Naive thymus-derived CD4-positive, alpha-beta T cell (primary cell): ENCODE measurements at regions of chr3 and their contacts with region 1.

Region 1: GRCh38 chr3:52154117-52155094 is at the start of gene POC1A:
- DNase-seq: peak; percentile 73 to 90 (median 82)
- ATAC-seq: peak; percentile 92
- H3K4me3 ChIP-seq: peak within 1 kb of the TSS; percentile 98
- H3K4me3 Mint-ChIP-seq: peak within 1 kb of the TSS; percentile 88 to 98 (median 96)
- H3K27ac ChIP-seq: peak within 1 kb of the TSS; percentile 85
- H3K27ac Mint-ChIP-seq: peak within 1 kb of the TSS; percentile 87 to 98 (median 94)
- H3K4me1 ChIP-seq: peaks cover 4 to 6% of the 10 kb centered on the region in 2 donors
- H3K4me1 Mint-ChIP-seq: peaks cover 5 to 22% (median 6%) of the 10 kb centered on the region in 7 donors
- H3K27me3 ChIP-seq: no peaks in the 10 kb centered on the region
- H3K27me3 Mint-ChIP-seq: peaks cover 0 to 1% (median 0%) of the 10 kb centered on the region in 5 donors
- total RNA-seq, gene POC1A: 0.58 to 19.7 (median 1.2) TPM

Region 2: GRCh38 chr3:50358355-50358910 is 1796.0 kb before region 1 on chr3:
- CTCF ChIA-PET with region 1: no interaction called
- POLR2A ChIA-PET with region 1: no interaction called
- intact Hi-C with region 1: no loop called
- DNase-seq: no peak
- ATAC-seq: no peak
- H3K4me3 ChIP-seq: peak overlapping the region; percentile 88
- H3K4me3 Mint-ChIP-seq: peak overlapping the region; percentile 80 to 99 (median 90)
- H3K27ac ChIP-seq: peak overlapping the region; percentile 93
- H3K27ac Mint-ChIP-seq: peak overlapping the region; percentile 48 to 97 (median 84)
- H3K4me1 ChIP-seq: peaks cover 30% of the 10 kb centered on the region in 2 donors
- H3K4me1 Mint-ChIP-seq: peaks cover 32 to 58% (median 44%) of the 10 kb centered on the region in 7 donors
- H3K27me3 ChIP-seq: no peaks in the 10 kb centered on the region
- H3K27me3 Mint-ChIP-seq: no peaks in the 10 kb centered on the region

Region 3: DNA sequence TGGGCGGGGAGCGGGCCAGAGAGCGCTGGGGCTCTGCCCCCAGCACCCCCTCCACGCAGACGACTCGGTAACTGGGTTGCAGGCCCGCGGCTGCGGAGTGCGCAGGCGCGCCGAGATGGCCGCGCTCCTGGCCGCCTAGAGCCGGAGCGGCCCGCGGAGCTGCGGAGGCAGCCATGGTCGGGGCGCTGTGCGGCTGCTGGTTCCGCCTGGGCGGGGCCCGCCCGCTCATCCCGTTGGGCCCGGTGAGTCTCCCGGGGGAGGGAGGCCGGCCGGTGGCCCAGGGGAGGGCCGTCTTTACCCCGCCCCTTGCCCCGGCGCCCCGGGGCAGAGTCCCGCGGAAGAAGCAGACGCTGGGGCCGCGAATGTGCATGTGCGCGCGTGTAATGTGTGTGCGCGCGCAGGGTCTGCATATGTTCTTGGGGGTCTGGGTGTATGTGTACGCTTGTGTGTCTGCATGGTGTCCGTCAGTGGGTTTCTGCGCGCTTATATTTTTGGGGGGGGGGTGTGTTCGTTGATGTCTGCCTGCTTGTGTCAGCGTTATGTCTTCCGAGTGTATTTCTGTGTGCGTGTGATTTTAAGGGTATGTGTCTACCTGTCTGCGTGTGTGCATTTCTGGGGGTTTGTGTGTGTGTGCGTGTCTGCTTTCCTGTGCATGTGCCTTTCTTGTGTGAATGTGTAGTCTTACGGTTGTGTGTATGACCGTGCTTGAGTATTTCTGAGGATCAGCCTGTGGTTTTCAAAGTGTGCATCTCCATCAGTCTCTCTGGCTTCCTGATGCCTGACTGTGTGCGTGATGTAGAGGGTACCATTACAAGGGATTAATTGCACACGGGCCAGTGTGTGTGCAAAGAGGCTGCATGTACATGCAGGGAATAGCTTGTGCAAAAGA is 179.2 kb before region 1 on chr3 and contains the start of gene ABHD14A:
- CTCF ChIA-PET with region 1: no interaction called
- POLR2A ChIA-PET with region 1: no interaction called
- intact Hi-C with region 1: loop called in 1 of 2 experiments (anchors 1 kb)
- DNase-seq: peak; percentile 68 to 85 (median 73)
- ATAC-seq: peak; percentile 80
- H3K4me3 ChIP-seq: peak within 1 kb of the TSS; percentile 82
- H3K4me3 Mint-ChIP-seq: peak within 1 kb of the TSS; percentile 83 to 100 (median 94)
- H3K27ac ChIP-seq: peak within 1 kb of the TSS; percentile 77
- H3K27ac Mint-ChIP-seq: peak within 1 kb of the TSS; percentile 88 to 97 (median 92)
- H3K4me1 ChIP-seq: peaks cover 9 to 21% of the 10 kb centered on the region in 2 donors
- H3K4me1 Mint-ChIP-seq: peaks cover 26 to 53% (median 32%) of the 10 kb centered on the region in 7 donors
- H3K27me3 ChIP-seq: no peaks in the 10 kb centered on the region
- H3K27me3 Mint-ChIP-seq: no peaks in the 10 kb centered on the region
- total RNA-seq, gene ABHD14A: 9.9 to 23.7 (median 14.7) TPM

Region 4: GRCh38 chr3:52197842-52198668 is 43.6 kb after region 1 on chr3 and contains the start of gene ALAS1:
- CTCF ChIA-PET with region 1: no interaction called
- POLR2A ChIA-PET with region 1: interaction called, 8 read pairs
- intact Hi-C with region 1: loop called (anchors 1 kb)
- DNase-seq: peak; percentile 86 to 99 (median 94)
- ATAC-seq: peak; percentile 97
- H3K4me3 ChIP-seq: peak within 1 kb of the TSS; percentile 80
- H3K4me3 Mint-ChIP-seq: peak within 1 kb of the TSS; percentile 85 to 98 (median 96)
- H3K27ac ChIP-seq: peak within 1 kb of the TSS; percentile 94
- H3K27ac Mint-ChIP-seq: peak within 1 kb of the TSS; percentile 88 to 98 (median 94)
- H3K4me1 ChIP-seq: peaks cover 25 to 30% of the 10 kb centered on the region in 2 donors
- H3K4me1 Mint-ChIP-seq: peaks cover 33 to 56% (median 49%) of the 10 kb centered on the region in 7 donors
- H3K27me3 ChIP-seq: no peaks in the 10 kb centered on the region
- H3K27me3 Mint-ChIP-seq: no peaks in the 10 kb centered on the region
- total RNA-seq, gene ALAS1: 12.6 to 74.3 (median 27.4) TPM

Region 5: GRCh38 chr3:52455283-52456168 is 301.1 kb after region 1 on chr3 and contains the start of gene NISCH:
- CTCF ChIA-PET with region 1: no interaction called
- POLR2A ChIA-PET with region 1: no interaction called
- intact Hi-C with region 1: loop called in 1 of 2 experiments (anchors 1 kb)
- DNase-seq: peak; percentile 92 to 99 (median 97)
- ATAC-seq: peak; percentile 98
- H3K4me3 ChIP-seq: peak within 1 kb of the TSS; percentile 98
- H3K4me3 Mint-ChIP-seq: peak within 1 kb of the TSS; percentile 87 to 96 (median 93)
- H3K27ac ChIP-seq: peak within 1 kb of the TSS; percentile 88
- H3K27ac Mint-ChIP-seq: peak within 1 kb of the TSS; percentile 96 to 100 (median 99)
- H3K4me1 ChIP-seq: peaks cover 15 to 23% of the 10 kb centered on the region in 2 donors
- H3K4me1 Mint-ChIP-seq: peaks cover 25 to 47% (median 41%) of the 10 kb centered on the region in 7 donors
- H3K27me3 ChIP-seq: no peaks in the 10 kb centered on the region
- H3K27me3 Mint-ChIP-seq: no peaks in the 10 kb centered on the region
- total RNA-seq, gene NISCH: 86.8 to 210 (median 162) TPM

Region 6: DNA sequence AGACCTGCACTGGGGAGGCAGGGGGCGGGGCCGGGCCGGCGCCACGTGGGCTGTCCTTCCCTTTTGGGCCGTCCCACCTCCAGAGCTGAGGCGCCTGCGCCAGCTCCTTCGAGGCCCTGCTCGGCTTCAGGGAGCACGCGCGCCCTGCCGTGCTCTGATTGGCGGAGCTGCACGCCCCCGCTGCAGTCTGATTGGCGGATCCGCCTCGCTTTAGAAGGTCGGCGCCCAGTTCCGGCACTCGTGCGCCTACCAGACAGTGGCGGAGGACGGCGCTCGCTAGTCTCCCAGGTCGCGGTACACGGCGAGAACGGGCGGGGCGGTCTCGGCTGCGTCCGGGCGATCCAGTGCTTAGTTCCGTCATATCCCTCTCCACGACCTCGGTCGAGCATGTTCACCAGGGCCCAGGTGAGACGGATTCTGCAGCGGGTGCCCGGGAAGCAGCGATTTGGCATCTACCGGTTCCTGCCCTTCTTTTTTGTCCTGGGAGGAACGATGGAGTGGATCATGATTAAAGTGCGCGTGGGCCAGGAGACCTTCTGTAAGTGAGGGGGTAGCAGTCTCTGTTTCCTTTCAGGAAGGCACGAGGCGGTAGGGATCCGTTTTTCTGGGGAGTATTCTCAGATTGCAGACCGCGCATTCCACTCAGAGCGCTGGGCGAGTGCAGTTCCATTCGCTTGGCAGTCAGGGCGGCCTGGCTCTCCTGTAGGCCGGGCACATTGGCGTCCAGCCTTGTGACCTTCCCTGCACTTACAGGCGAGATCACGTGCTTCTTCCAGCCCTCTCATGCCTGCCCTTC is 382.2 kb after region 1 on chr3 and contains the start of gene UQCC5:
- CTCF ChIA-PET with region 1: no interaction called
- POLR2A ChIA-PET with region 1: no interaction called
- intact Hi-C with region 1: loop called in 1 of 2 experiments (anchors 2 kb)
- DNase-seq: peak; percentile 89 to 98 (median 97)
- ATAC-seq: peak; percentile 95
- H3K4me3 ChIP-seq: peak within 1 kb of the TSS; percentile 67
- H3K4me3 Mint-ChIP-seq: peak within 1 kb of the TSS; percentile 96 to 100 (median 99)
- H3K27ac ChIP-seq: peak within 1 kb of the TSS; percentile 85
- H3K27ac Mint-ChIP-seq: peak within 1 kb of the TSS; percentile 96 to 99 (median 98)
- H3K4me1 ChIP-seq: peaks cover 24 to 30% of the 10 kb centered on the region in 2 donors
- H3K4me1 Mint-ChIP-seq: peaks cover 29 to 66% (median 50%) of the 10 kb centered on the region in 7 donors
- H3K27me3 ChIP-seq: no peaks in the 10 kb centered on the region
- H3K27me3 Mint-ChIP-seq: no peaks in the 10 kb centered on the region
- total RNA-seq, gene UQCC5: 5.4 to 11.9 (median 10.7) TPM